Activated CD8-positive, alpha-beta T cell treated with anti-CD3 and anti-CD28 coated beads for 36 hours (primary cell): ENCODE measurements at regions of chr6 and their contacts with region 1.

Region 1: GRCh38 chr6:157764178-157765033 is 58.6 kb upstream of the SNX9 start:
- DNase-seq: peak; percentile 88
- ATAC-seq: peak; percentile 58
- H3K4me3 Mint-ChIP-seq: peak overlapping the region; percentile 40
- H3K27ac Mint-ChIP-seq: peak overlapping the region; percentile 97
- H3K4me1 Mint-ChIP-seq: peaks cover 87% of the 10 kb centered on the region
- H3K27me3 Mint-ChIP-seq: no peaks in the 10 kb centered on the region
- CTCF ChIP-seq: no peak

Region 2: GRCh38 chr6:157659536-157660271 is 104.7 kb before region 1 on chr6:
- CTCF ChIA-PET with region 1: no interaction called
- POLR2A ChIA-PET with region 1: no interaction called
- intact Hi-C with region 1: no loop called
- DNase-seq: no peak
- ATAC-seq: no peak
- H3K4me3 Mint-ChIP-seq: no peak overlapping the region
- H3K27ac Mint-ChIP-seq: no peak overlapping the region
- H3K4me1 Mint-ChIP-seq: no peaks in the 10 kb centered on the region
- H3K27me3 Mint-ChIP-seq: no peaks in the 10 kb centered on the region
- CTCF ChIP-seq: no peak

Region 3: GRCh38 chr6:157791450-157791849 is 27.0 kb after region 1 on chr6:
- CTCF ChIA-PET with region 1: interaction called, 11 read pairs
- POLR2A ChIA-PET with region 1: interaction called, 8 read pairs
- intact Hi-C with region 1: no loop called
- DNase-seq: no peak
- ATAC-seq: no peak
- H3K4me3 Mint-ChIP-seq: no peak overlapping the region
- H3K27ac Mint-ChIP-seq: no peak overlapping the region
- H3K4me1 Mint-ChIP-seq: peaks cover 12% of the 10 kb centered on the region
- H3K27me3 Mint-ChIP-seq: no peaks in the 10 kb centered on the region
- CTCF ChIP-seq: no peak

Region 4: DNA sequence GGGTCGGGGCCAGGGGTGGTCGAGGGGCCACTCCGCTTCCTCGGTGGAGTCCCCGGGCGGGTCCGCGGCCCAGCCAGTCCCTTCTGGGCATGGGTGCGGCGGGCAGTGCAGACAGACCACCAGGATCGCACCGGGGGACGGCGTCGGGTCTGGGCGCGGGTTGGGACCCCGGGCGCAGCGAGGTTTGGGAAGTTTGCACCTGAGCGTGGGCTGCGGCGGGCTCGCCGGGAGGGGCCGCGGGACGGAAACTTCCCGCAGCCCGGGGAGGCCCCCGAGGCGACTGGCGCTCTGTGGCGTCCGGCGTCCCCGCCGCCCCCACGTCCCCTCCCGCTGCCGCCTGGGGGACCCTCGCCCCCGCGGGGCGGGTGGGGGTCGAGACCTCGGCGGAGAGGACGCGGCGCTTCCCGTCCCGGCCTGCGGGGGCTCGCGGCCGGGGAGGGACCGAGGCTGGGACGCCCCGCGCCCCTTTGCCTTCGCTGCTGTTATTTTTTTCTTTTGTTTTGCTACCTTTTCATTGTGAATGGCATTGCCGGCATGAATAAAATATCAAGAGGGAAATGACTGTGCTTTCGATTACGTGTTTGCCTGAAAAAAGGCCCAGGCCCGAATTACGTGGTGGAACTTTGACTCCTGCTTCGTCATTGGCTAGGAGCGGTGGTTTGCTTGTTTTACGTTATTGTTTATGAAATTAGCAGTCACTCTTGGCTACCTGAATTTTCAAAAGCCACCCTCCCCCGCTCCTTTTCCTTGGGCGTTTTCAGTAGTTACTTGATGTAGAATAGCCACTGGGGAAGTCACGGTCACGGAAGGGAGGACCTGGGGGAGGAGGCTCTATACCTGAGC is 59.3 kb after region 1 on chr6:
- CTCF ChIA-PET with region 1: interaction called, 4 read pairs
- POLR2A ChIA-PET with region 1: interaction called, 102 read pairs
- intact Hi-C with region 1: loop called (anchors 1 kb)
- DNase-seq: peak; percentile 96
- ATAC-seq: peak; percentile 76
- H3K4me3 Mint-ChIP-seq: peak overlapping the region; percentile 99
- H3K27ac Mint-ChIP-seq: peak overlapping the region; percentile 100
- H3K4me1 Mint-ChIP-seq: peaks cover 37% of the 10 kb centered on the region
- H3K27me3 Mint-ChIP-seq: peaks cover 3% of the 10 kb centered on the region
- CTCF ChIP-seq: no peak

Region 5: GRCh38 chr6:157845493-157846259 is 81.3 kb after region 1 on chr6:
- CTCF ChIA-PET with region 1: interaction called, 12 read pairs
- POLR2A ChIA-PET with region 1: interaction called, 3 read pairs
- intact Hi-C with region 1: no loop called
- DNase-seq: no peak
- ATAC-seq: peak; percentile 58
- H3K4me3 Mint-ChIP-seq: no peak overlapping the region
- H3K27ac Mint-ChIP-seq: peak overlapping the region; percentile 40
- H3K4me1 Mint-ChIP-seq: peaks cover 86% of the 10 kb centered on the region
- H3K27me3 Mint-ChIP-seq: no peaks in the 10 kb centered on the region
- CTCF ChIP-seq: no peak

Region 6: DNA sequence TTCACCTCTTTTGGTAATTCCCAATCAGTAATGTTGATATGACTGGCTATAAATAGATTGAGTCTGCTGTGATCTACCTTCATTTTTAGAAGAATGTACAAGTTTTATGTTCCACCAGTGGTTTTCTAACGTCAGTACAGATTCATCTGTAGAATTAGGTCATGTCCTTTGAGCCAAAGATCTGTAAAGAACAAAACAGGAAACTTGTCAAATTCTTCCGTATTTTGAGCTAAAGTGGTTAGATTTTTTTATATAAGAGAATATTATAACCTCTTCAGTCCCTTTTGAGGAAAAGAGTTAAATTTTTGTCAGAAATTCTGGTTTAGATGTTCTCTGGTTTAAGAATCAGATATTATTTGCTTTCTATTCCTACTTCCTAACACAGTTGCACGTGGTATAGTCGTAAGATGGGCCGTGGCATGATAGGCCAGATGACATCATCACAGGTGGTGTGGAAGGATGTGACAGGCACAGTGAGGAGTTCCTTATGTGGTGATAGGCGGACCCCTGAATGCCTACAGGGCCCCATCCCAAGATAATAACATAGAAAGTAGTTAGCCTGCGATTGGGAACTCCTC is 120.9 kb after region 1 on chr6:
- CTCF ChIA-PET with region 1: interaction called, 6 read pairs
- POLR2A ChIA-PET with region 1: interaction called, 7 read pairs
- intact Hi-C with region 1: loop called (anchors 5 kb)
- DNase-seq: peak; percentile 84
- ATAC-seq: peak; percentile 89
- H3K4me3 Mint-ChIP-seq: peak overlapping the region; percentile 33
- H3K27ac Mint-ChIP-seq: peak overlapping the region; percentile 93
- H3K4me1 Mint-ChIP-seq: peaks cover 71% of the 10 kb centered on the region
- H3K27me3 Mint-ChIP-seq: no peaks in the 10 kb centered on the region
- CTCF ChIP-seq: no peak